ENCODE measurements at regions of chr7 and their contacts with region 1.

Region 1: DNA sequence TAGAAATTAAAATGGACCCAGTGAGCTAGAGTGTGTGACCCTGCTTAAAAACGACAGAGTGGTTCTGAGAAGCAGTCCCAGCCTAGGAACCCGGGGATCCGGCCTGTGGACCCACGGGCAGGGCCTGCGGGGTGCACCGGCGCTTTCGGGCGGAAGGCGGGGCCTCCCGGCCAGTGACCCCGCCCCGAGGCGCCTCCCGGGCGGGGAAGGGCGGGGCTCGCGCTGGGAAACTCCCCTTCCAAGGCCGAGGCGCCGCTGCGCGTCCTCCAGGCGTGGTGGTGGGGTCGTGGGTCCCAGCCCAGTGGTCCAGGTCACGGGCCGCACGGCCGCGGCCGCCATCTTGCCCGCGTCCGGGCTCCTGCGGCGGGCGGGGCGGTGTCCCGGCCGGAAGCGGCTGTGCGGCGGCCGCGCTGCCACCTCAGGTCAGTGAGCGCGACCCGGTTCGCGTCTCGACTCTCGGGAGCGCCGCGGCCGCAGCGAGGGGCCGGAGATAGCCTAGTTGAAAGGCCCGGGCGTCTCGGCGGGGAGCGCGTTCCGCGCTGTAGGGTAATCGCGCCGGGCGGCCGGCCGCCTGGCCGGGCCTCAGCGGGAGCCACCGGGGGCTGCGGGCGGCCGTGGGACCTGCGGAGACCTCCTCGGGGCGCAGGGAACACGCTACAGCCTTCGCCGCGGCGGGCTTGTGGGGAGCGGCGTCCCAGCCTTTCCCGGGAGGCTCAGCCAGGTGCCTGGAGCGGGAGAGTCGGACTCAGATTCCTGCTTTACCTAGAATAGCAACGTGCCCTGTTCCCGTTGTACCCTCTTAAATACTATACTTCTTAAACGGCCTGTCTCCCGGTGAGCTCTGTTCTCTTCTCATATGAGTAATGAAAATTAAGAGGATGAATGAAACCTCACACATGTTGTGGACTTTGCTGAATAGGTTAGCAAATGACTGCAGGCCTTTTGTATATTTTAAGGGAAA is at the start of gene MIOS:
- DNase-seq: peak; percentile 85
- ATAC-seq: peak; percentile 83
- H3K4me3 Mint-ChIP-seq: peak within 1 kb of the TSS; percentile 85
- H3K27ac Mint-ChIP-seq: peak within 1 kb of the TSS; percentile 90
- H3K4me1 Mint-ChIP-seq: peaks cover 35% of the 10 kb centered on the region
- H3K27me3 Mint-ChIP-seq: no peaks in the 10 kb centered on the region
- CTCF ChIP-seq: no peak
- total RNA-seq, gene MIOS: 70.2 and 81.3 TPM in 2 replicates

Region 2: DNA sequence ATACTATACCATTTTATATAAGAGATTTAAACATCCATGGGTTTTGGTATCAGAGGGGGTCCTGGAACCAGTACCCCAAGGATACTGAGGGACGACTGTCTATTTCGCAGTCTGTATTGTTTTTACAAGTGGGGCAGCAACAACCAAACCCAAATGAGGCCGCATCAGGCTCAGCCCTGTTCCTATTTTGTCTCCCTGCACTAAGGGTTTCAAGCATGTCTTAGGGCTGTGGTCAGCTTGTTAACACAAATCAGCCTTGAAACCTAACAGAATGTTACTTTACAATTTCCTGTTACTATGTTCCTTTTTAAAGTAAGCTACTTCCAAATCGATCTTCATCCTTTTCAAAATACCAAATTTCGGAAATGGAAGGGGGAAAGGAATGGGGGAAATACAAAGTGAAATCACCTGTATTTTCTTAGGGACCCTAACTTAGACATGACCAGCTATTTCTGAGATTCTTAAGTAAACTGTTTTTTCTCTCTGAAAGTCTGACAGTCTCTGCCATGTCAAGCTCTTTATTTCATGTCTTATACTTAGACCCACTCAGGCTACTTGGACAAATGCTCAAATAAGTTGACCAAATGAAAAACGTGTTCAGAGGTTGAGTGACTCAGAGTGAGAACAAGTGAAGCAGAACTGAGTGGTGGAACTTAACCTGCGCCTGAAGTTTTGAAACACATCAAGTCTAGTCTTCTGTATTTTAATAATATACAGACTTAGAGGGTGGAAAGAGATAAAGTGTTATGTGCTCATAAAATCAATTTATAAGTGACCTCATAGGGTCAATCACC is 308.8 kb before region 1 on chr7:
- CTCF ChIA-PET with region 1: no interaction called
- POLR2A ChIA-PET with region 1: interaction called, 6 read pairs
- intact Hi-C with region 1: loop called (anchors 2 kb)
- DNase-seq: no peak
- ATAC-seq: peak; percentile 77
- H3K4me3 Mint-ChIP-seq: peak overlapping the region; percentile 78
- H3K27ac Mint-ChIP-seq: peak overlapping the region; percentile 89
- H3K4me1 Mint-ChIP-seq: peaks cover 66% of the 10 kb centered on the region
- H3K27me3 Mint-ChIP-seq: no peaks in the 10 kb centered on the region
- CTCF ChIP-seq: no peak

Region 3: DNA sequence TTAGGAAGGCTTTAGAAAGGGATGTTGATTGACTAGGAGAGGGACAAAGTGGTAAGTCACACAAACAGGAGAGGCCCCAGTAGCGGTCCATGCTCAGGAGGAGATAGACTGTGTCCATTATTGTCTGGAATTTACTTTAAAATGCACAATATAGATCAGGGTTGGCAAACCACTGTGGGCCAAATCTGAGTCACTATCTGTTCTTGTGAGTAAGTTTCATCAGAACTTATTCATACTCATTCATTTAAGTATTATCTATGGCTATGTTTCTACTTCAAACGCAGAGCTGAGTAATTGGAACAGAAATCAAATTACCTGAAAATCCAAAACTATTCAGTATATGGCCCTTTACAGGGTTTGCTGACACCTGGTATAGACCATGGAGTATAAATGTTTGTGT is 197.8 kb before region 1 on chr7:
- CTCF ChIA-PET with region 1: no interaction called
- POLR2A ChIA-PET with region 1: no interaction called
- intact Hi-C with region 1: no loop called
- DNase-seq: no peak
- ATAC-seq: no peak
- H3K4me3 Mint-ChIP-seq: no peak overlapping the region
- H3K27ac Mint-ChIP-seq: no peak overlapping the region
- H3K4me1 Mint-ChIP-seq: peaks cover 3% of the 10 kb centered on the region
- H3K27me3 Mint-ChIP-seq: no peaks in the 10 kb centered on the region
- CTCF ChIP-seq: no peak

Region 4: GRCh38 chr7:7424151-7424873 is 142.6 kb before region 1 on chr7:
- CTCF ChIA-PET with region 1: no interaction called
- POLR2A ChIA-PET with region 1: no interaction called
- intact Hi-C with region 1: no loop called
- DNase-seq: no peak
- ATAC-seq: peak; percentile 75
- H3K4me3 Mint-ChIP-seq: peak overlapping the region; percentile 86
- H3K27ac Mint-ChIP-seq: peak overlapping the region; percentile 37
- H3K4me1 Mint-ChIP-seq: peaks cover 6% of the 10 kb centered on the region
- H3K27me3 Mint-ChIP-seq: no peaks in the 10 kb centered on the region
- CTCF ChIP-seq: no peak

Region 5: DNA sequence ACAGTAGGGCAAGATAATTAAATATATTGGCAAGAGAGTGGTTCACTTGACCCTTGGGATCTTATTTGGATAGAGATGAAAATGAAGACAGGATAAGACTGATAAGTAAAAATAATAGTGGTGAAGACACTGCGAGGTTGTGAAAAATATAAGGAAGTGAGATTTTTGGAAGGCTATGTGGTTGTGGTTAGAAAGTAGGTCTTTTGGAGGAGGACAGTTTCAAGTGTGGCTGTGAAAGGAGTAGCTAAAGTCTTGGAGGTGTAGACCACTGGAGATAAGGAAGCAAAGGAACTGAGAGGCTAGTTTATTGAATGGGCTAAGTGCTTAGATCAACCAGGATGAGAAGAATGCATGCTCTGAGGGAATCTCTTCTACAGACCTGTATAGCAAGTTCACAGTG is 11.0 kb after region 1 on chr7:
- CTCF ChIA-PET with region 1: no interaction called
- POLR2A ChIA-PET with region 1: interaction called, 3 read pairs
- intact Hi-C with region 1: loop called (anchors 1 kb)
- DNase-seq: no peak
- ATAC-seq: peak; percentile 56
- H3K4me3 Mint-ChIP-seq: no peak overlapping the region
- H3K27ac Mint-ChIP-seq: no peak overlapping the region
- H3K4me1 Mint-ChIP-seq: peaks cover 24% of the 10 kb centered on the region
- H3K27me3 Mint-ChIP-seq: no peaks in the 10 kb centered on the region
- CTCF ChIP-seq: no peak

Region 6: GRCh38 chr7:8176370-8177081 is 609.6 kb after region 1 on chr7:
- CTCF ChIA-PET with region 1: no interaction called
- POLR2A ChIA-PET with region 1: no interaction called
- intact Hi-C with region 1: loop called (anchors 2 kb)
- DNase-seq: peak; percentile 21
- ATAC-seq: peak; percentile 89
- H3K4me3 Mint-ChIP-seq: peak overlapping the region; percentile 61
- H3K27ac Mint-ChIP-seq: peak overlapping the region; percentile 91
- H3K4me1 Mint-ChIP-seq: peaks cover 61% of the 10 kb centered on the region
- H3K27me3 Mint-ChIP-seq: no peaks in the 10 kb centered on the region
- CTCF ChIP-seq: no peak

Measured in activated B cell treated with CpG ODN at 0.5 μM for 24 hours (primary cell).